A673 (cell line): ENCODE measurements at regions of chr1 and their contacts with region 1.

Region 1: GRCh38 chr1:76330991-76331603 is 256.6 kb downstream of the ST6GALNAC3 start:
- DNase-seq: peak; percentile 81
- H3K4me3 ChIP-seq: no peak overlapping the region
- H3K27ac ChIP-seq: no peak overlapping the region
- H3K4me1 ChIP-seq: no peaks in the 10 kb centered on the region
- H3K27me3 ChIP-seq: no peaks in the 10 kb centered on the region
- CTCF ChIP-seq: peak; percentile 96

Region 2: GRCh38 chr1:76154206-76154956 is 176.7 kb before region 1 on chr1:
- CTCF ChIA-PET with region 1: interaction called, 3 read pairs
- POLR2A ChIA-PET with region 1: no interaction called
- intact Hi-C with region 1: loop called (anchors 5 kb)
- DNase-seq: peak; percentile 80
- H3K4me3 ChIP-seq: peak overlapping the region; percentile 29
- H3K27ac ChIP-seq: no peak overlapping the region
- H3K4me1 ChIP-seq: no peaks in the 10 kb centered on the region
- H3K27me3 ChIP-seq: no peaks in the 10 kb centered on the region
- CTCF ChIP-seq: peak; percentile 98

Region 3: DNA sequence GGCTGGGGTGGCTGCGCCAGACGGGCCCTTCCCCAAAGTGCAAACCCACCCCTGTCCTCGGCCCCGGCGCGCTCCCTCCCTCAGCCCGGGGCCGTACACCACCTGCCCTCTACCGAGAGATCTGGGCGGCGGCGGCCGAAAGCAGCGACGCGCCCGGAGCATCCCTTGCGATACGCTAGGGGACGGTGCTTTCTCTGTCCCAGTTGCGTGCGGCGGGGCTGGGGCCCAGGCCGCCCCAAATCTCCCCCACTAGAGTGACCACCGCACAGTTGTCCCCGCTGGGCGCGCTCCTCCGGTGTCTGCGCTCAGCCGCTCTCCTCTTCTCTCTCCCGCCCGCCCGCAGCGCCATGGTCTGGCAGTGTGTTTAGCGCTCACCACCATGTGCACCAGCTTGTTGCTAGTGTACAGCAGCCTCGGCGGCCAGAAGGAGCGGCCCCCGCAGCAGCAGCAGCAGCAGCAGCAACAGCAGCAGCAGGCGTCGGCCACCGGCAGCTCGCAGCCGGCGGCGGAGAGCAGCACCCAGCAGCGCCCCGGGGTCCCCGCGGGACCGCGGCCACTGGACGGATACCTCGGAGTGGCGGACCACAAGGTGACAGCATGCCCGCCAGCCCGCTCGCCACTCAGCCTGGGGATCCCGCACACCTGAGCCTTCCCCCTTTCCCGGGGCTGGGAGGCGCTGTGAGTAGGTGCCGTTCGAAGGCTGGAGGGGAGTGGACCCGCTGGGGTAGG is 537.2 kb after region 1 on chr1:
- CTCF ChIA-PET with region 1: no interaction called
- POLR2A ChIA-PET with region 1: no interaction called
- intact Hi-C with region 1: loop called (anchors 10 kb)
- DNase-seq: peak; percentile 27
- H3K4me3 ChIP-seq: peak overlapping the region; percentile 36
- H3K27ac ChIP-seq: no peak overlapping the region
- H3K4me1 ChIP-seq: peaks cover 6% of the 10 kb centered on the region
- H3K27me3 ChIP-seq: peaks cover 84% of the 10 kb centered on the region
- CTCF ChIP-seq: 0 out of 2 replicates have a peak, but pooled peaks have one; percentile 22